MCF 10A (cell line): ENCODE measurements at regions of chr19 and their contacts with region 1.

Region 1: GRCh38 chr19:53808710-53809125 is 15.4 kb downstream of the NLRP12 start:
- DNase-seq: peak; percentile 41
- H3K4me3 Mint-ChIP-seq: no peak overlapping the region
- H3K27ac Mint-ChIP-seq: no peak overlapping the region
- H3K4me1 Mint-ChIP-seq: no peaks in the 10 kb centered on the region
- H3K27me3 Mint-ChIP-seq: no peaks in the 10 kb centered on the region
- CTCF ChIP-seq: peak; percentile 24

Region 2: GRCh38 chr19:53879140-53880081 is 70.7 kb after region 1 on chr19:
- CTCF ChIA-PET with region 1: interaction called, 12 read pairs
- POLR2A ChIA-PET with region 1: no interaction called
- intact Hi-C with region 1: no loop called
- DNase-seq: peak; percentile 78
- H3K4me3 Mint-ChIP-seq: no peak overlapping the region
- H3K27ac Mint-ChIP-seq: no peak overlapping the region
- H3K4me1 Mint-ChIP-seq: no peaks in the 10 kb centered on the region
- H3K27me3 Mint-ChIP-seq: no peaks in the 10 kb centered on the region
- CTCF ChIP-seq: no peak

Region 3: DNA sequence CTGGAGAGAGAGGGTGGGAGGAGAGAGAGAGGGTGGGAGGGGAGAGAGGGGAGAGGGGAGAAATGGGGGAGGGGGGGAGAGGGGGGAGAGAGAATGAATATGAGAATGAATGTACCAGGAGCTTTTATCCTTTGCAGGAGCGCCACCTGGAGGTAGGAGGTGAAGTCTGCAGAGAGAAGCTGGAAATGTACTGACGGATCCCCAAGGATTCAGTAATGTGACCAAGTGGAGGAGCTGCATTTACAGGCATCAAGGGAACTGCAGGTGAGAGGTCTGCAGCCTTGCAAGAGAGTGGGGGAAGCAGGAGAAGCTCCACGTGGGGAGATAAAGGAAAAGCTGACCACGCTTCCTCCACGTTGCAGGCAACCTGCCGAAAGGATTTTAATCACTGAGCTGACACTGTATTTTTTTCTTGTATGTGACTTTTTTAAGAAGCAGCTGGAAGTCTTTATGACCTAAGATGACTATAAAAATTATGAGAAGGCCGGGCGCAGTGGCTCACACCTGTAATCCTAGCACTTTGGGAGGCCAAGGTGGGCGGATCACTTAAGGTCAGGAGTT is 221.3 kb after region 1 on chr19:
- CTCF ChIA-PET with region 1: interaction called, 89 read pairs
- POLR2A ChIA-PET with region 1: no interaction called
- intact Hi-C with region 1: no loop called
- DNase-seq: peak; percentile 82
- H3K4me3 Mint-ChIP-seq: no peak overlapping the region
- H3K27ac Mint-ChIP-seq: no peak overlapping the region
- H3K4me1 Mint-ChIP-seq: peaks cover 6% of the 10 kb centered on the region
- H3K27me3 Mint-ChIP-seq: no peaks in the 10 kb centered on the region
- CTCF ChIP-seq: peak; percentile 49